ENCODE measurements at regions of chr22 and their contacts with region 1.

Region 1: DNA sequence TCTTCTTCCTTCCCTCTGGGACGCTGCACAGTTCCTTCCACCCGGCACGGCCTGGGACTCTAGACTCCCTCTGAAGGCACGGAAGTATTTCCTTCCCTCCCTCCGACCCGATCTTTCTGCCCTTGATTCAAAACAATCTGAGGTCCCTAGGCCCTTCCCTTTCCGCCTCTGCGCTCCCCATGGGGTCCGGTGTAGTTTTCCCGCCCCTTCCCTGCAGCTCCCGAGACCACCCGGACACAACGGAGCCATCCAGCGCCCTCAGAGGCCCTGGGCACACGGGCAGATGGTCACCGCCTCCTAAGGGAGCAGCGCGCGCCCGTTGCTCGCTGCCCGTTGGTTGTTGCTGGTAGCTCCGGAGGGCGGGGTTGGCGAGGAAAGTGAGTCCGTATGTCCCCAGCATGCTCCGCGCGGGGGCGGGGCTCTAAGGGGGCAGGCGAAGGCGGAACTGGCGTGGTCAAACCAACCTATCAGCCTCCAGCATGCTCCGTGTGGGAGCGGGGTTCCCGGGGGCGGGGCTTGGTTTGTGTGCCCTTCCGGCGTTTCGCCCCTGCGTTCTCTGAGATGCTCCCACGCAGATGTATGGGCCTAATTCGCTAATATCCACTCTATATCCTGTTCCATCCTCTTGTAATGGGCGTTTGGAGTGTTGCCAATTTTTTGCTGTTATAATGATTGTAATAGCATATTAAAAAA is 19.6 kb downstream of the MIF start:
- DNase-seq: peak; percentile 98 to 99
- ATAC-seq: peak; percentile 99 to 100 (median 99)
- H3K4me3 ChIP-seq: peak overlapping the region; percentile 44
- H3K4me3 Mint-ChIP-seq: peak overlapping the region; percentile 96
- H3K27ac ChIP-seq: peak overlapping the region; percentile 75
- H3K27ac Mint-ChIP-seq: peak overlapping the region; percentile 95 to 98
- H3K4me1 ChIP-seq: peaks cover 7% of the 10 kb centered on the region
- H3K4me1 Mint-ChIP-seq: peaks cover 8 to 22% of the 10 kb centered on the region in 2 donors
- H3K27me3 ChIP-seq: no peaks in the 10 kb centered on the region
- H3K27me3 Mint-ChIP-seq: no peaks in the 10 kb centered on the region
- CTCF ChIP-seq: no peak

Region 2: GRCh38 chr22:23894710-23895598 is 18.9 kb before region 1 on chr22:
- intact Hi-C with region 1: loop called (anchors 1 kb)
- DNase-seq: peak; percentile 44 to 78
- ATAC-seq: peak; percentile 29 to 60 (median 47)
- H3K4me3 ChIP-seq: peak overlapping the region; percentile 88
- H3K4me3 Mint-ChIP-seq: peak overlapping the region; percentile 93
- H3K27ac ChIP-seq: peak overlapping the region; percentile 96
- H3K27ac Mint-ChIP-seq: peak overlapping the region; percentile 90 to 96
- H3K4me1 ChIP-seq: peaks cover 23% of the 10 kb centered on the region
- H3K4me1 Mint-ChIP-seq: peaks cover 20 to 43% of the 10 kb centered on the region in 2 donors
- H3K27me3 ChIP-seq: no peaks in the 10 kb centered on the region
- H3K27me3 Mint-ChIP-seq: no peaks in the 10 kb centered on the region
- CTCF ChIP-seq: peak; percentile 39

Measured in natural killer cell (primary cell).